PC-3 (cell line): ENCODE measurements at regions of chr10 and their contacts with region 1.

Region 1: DNA sequence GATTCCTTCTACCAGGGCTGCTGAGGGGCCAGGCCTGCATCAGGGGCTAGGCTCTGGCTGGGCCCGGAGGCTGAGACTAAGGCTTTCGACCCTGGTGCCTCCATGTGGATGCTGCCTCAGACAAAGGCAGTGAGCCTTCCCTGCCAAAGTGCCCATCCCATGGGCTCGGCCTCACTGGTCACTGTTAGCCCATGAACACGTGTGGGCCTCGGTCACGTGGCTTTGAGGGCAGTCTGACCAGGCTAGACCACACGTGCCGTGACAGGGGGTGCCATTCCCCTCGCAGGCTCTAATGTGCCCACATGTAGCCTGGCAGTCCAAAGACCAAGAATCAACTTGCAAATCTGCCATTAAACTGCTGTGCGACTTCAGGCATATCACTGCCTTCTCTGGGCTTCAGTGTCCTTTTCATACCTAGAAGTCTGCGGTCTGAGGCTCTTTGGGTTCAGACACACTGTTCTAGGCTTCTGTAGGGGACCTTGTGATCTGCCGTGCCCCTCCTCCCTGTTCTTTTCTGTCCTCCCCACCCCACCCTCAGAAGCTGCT is 17.6 kb upstream of the SLC29A3 start:
- DNase-seq: no peak
- ATAC-seq: no peak
- H3K4me3 ChIP-seq: no peak overlapping the region
- H3K27ac ChIP-seq: no peak overlapping the region
- H3K4me1 ChIP-seq: no peaks in the 10 kb centered on the region
- H3K27me3 ChIP-seq: no peaks in the 10 kb centered on the region
- CTCF ChIP-seq: no peak

Region 2: GRCh38 chr10:71270301-71271220 is 30.9 kb before region 1 on chr10:
- CTCF ChIA-PET with region 1: no interaction called
- POLR2A ChIA-PET with region 1: interaction called, 14 read pairs
- intact Hi-C with region 1: no loop called
- DNase-seq: peak; percentile 69
- ATAC-seq: peak; percentile 74
- H3K4me3 ChIP-seq: no peak overlapping the region
- H3K27ac ChIP-seq: no peak overlapping the region
- H3K4me1 ChIP-seq: peaks cover 6% of the 10 kb centered on the region; the same call in 1 of the 2 replicates
- H3K27me3 ChIP-seq: no peaks in the 10 kb centered on the region
- CTCF ChIP-seq: peak; percentile 58